ENCODE measurements at regions of chr12 and their contacts with region 1.

Region 1: DNA sequence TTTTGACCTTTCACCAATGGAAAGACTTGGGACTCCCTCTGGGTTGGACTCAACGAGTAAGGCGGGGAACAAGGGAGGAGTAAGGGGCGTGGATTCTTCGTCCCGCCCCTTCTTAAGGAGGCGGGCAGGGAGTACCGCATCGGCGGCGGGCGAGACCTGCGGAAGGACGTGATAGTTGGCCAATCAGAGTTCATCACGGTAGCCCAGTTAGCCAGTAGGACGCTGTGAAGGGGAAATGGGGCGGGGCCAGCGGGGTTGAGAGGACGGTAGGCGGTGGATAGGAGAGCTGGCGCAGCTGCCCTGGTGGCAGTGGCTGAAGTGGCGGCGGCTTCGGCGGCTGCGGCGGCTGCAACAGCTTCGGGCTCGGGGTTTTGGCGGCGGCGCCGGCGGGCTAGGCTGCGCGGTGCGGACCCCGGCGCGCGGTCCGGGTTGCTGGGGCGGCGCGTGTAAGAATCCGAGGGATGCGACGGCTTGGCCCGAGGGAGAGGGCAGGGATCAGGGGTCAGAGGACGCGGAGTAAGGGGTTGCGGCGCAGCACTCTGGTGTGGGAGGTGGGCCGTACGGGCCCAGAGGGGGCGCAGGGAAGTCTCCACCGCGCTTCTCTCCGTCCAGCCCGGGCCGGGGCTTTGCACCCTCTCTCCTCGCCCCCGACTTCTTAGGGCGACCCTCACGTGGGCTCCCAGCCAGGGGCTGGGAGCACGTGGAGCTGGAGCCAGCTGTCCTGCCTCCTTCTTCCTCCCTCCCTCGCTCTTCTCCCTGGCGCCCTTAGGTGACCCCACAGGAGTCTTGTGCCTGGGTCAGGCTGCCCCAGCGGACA is at the start of gene TPCN1:
- DNase-seq: peak; percentile 100
- H3K4me3 Mint-ChIP-seq: peak within 1 kb of the TSS; percentile 94
- H3K27ac Mint-ChIP-seq: peak within 1 kb of the TSS; percentile 94
- H3K4me1 Mint-ChIP-seq: peaks cover 31% of the 10 kb centered on the region
- H3K27me3 Mint-ChIP-seq: no peaks in the 10 kb centered on the region
- total RNA-seq, gene TPCN1: 31.0 and 33.7 TPM in 2 replicates

Region 2: GRCh38 chr12:112881602-112882001 is 339.8 kb before region 1 on chr12:
- intact Hi-C with region 1: no loop called
- DNase-seq: no peak
- H3K4me3 Mint-ChIP-seq: no peak overlapping the region
- H3K27ac Mint-ChIP-seq: no peak overlapping the region
- H3K4me1 Mint-ChIP-seq: no peaks in the 10 kb centered on the region
- H3K27me3 Mint-ChIP-seq: peaks cover 44% of the 10 kb centered on the region

Region 3: GRCh38 chr12:112978163-112979040 is 243.0 kb before region 1 on chr12 and contains the start of gene OAS2:
- intact Hi-C with region 1: loop called (anchors 1 kb)
- DNase-seq: peak; percentile 96
- H3K4me3 Mint-ChIP-seq: peak within 1 kb of the TSS; percentile 91
- H3K27ac Mint-ChIP-seq: peak within 1 kb of the TSS; percentile 99
- H3K4me1 Mint-ChIP-seq: peaks cover 42% of the 10 kb centered on the region
- H3K27me3 Mint-ChIP-seq: no peaks in the 10 kb centered on the region
- total RNA-seq, gene OAS2: 111 and 118 TPM in 2 replicates

Region 4: GRCh38 chr12:113184900-113185773 is 36.3 kb before region 1 on chr12 and contains the starts of genes DDX54 and RITA1:
- intact Hi-C with region 1: loop called (anchors 1 kb)
- DNase-seq: peak; percentile 97
- H3K4me3 Mint-ChIP-seq: peak within 1 kb of the TSS; percentile 99
- H3K27ac Mint-ChIP-seq: peak within 1 kb of the TSS; percentile 98
- H3K4me1 Mint-ChIP-seq: peaks cover 20% of the 10 kb centered on the region
- H3K27me3 Mint-ChIP-seq: no peaks in the 10 kb centered on the region
- total RNA-seq, gene DDX54: 122 and 127 TPM in 2 replicates
- total RNA-seq, gene RITA1: 25.5 and 25.8 TPM in 2 replicates

Region 5: GRCh38 chr12:113232840-113233585 is 11.6 kb after region 1 on chr12:
- intact Hi-C with region 1: loop called (anchors 1 kb)
- DNase-seq: peak; percentile 87
- H3K4me3 Mint-ChIP-seq: peak overlapping the region; percentile 81
- H3K27ac Mint-ChIP-seq: peak overlapping the region; percentile 86
- H3K4me1 Mint-ChIP-seq: peaks cover 51% of the 10 kb centered on the region
- H3K27me3 Mint-ChIP-seq: no peaks in the 10 kb centered on the region

Region 6: GRCh38 chr12:113358381-113359132 is 137.2 kb after region 1 on chr12 and contains the start of gene PLBD2:
- intact Hi-C with region 1: loop called (anchors 5 kb)
- DNase-seq: peak; percentile 97
- H3K4me3 Mint-ChIP-seq: peak within 1 kb of the TSS; percentile 89
- H3K27ac Mint-ChIP-seq: peak within 1 kb of the TSS; percentile 76
- H3K4me1 Mint-ChIP-seq: peaks cover 16% of the 10 kb centered on the region
- H3K27me3 Mint-ChIP-seq: peaks cover 3% of the 10 kb centered on the region
- total RNA-seq, gene PLBD2: 16.0 and 16.3 TPM in 2 replicates

Measured in activated CD4-positive, alpha-beta T cell treated with anti-CD3 and anti-CD28 coated beads, Interleukin-2, amount 10 ng/mL, durations not matched to agents 24 days and 14 days (primary cell).